BJ (cell line): ENCODE measurements at regions of chr15 and their contacts with region 1.

Region 1: GRCh38 chr15:34241372-34242330 is 16.8 kb downstream of the EMC4 start:
- DNase-seq: no peak
- H3K4me3 ChIP-seq: no peak overlapping the region
- H3K27me3 ChIP-seq: no peaks in the 10 kb centered on the region
- CTCF ChIP-seq: peak; percentile 67

Region 2: GRCh38 chr15:34252545-34252944 is 10.9 kb after region 1 on chr15:
- CTCF ChIA-PET with region 1: interaction called, 28 read pairs
- POLR2A ChIA-PET with region 1: no interaction called
- DNase-seq: no peak
- H3K4me3 ChIP-seq: no peak overlapping the region
- H3K27me3 ChIP-seq: no peaks in the 10 kb centered on the region
- CTCF ChIP-seq: no peak

Region 3: GRCh38 chr15:34259566-34259965 is 17.9 kb after region 1 on chr15:
- CTCF ChIA-PET with region 1: interaction called, 21 read pairs
- POLR2A ChIA-PET with region 1: no interaction called
- DNase-seq: no peak
- H3K4me3 ChIP-seq: no peak overlapping the region
- H3K27me3 ChIP-seq: no peaks in the 10 kb centered on the region
- CTCF ChIP-seq: no peak

Region 4: GRCh38 chr15:34367101-34368081 is 125.7 kb after region 1 on chr15 and contains the start of gene LPCAT4:
- CTCF ChIA-PET with region 1: interaction called, 18 read pairs
- POLR2A ChIA-PET with region 1: no interaction called
- DNase-seq: peak; percentile 26
- H3K4me3 ChIP-seq: peak within 1 kb of the TSS; percentile 91
- H3K27me3 ChIP-seq: no peaks in the 10 kb centered on the region
- CTCF ChIP-seq: peak; percentile 96
- polyA plus RNA-seq, gene LPCAT4: 29.5 and 45.3 TPM in 2 replicates

Region 5: DNA sequence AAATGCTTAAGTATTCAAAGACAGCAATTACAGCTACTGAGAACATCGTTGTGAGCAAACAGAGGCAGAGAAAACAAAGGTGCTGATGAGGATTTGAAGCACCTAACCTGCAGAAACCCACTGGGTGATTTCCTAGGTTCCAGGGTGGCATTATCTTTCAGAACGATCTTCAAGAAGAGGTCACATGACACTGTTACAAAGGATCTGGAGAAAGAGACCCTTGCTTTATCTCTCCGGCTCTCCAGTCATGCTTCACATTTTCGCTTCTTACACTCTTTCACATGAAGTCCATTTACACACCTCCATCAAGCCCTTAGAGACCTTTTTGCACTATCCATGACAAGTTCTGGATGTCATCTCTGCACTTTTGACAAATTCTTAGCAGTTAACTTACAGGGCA is 271.0 kb after region 1 on chr15:
- CTCF ChIA-PET with region 1: no interaction called
- POLR2A ChIA-PET with region 1: no interaction called
- DNase-seq: no peak
- H3K4me3 ChIP-seq: no peak overlapping the region
- H3K27me3 ChIP-seq: peaks cover 10% of the 10 kb centered on the region
- CTCF ChIP-seq: no peak